Activated CD8-positive, alpha-beta memory T cell treated with anti-CD3 and anti-CD28 coated beads, Interleukin-2, amount 10 ng/mL, durations not matched to agents 7 days and 5 days (primary cell): ENCODE measurements at regions of chr6 and their contacts with region 1.

Region 1: GRCh38 chr6:152948150-152948768 is 34.6 kb downstream of the FBXO5 start:
- DNase-seq: no peak
- ATAC-seq: peak; percentile 69
- H3K4me3 Mint-ChIP-seq: no peak overlapping the region
- H3K27ac Mint-ChIP-seq: no peak overlapping the region
- H3K4me1 Mint-ChIP-seq: peaks cover 9% of the 10 kb centered on the region
- H3K27me3 Mint-ChIP-seq: peaks cover 22% of the 10 kb centered on the region

Region 2: GRCh38 chr6:152863618-152864326 is 84.5 kb before region 1 on chr6:
- CTCF ChIA-PET with region 1: interaction called, 13 read pairs
- DNase-seq: peak; percentile 70
- ATAC-seq: peak; percentile 83
- H3K4me3 Mint-ChIP-seq: no peak overlapping the region
- H3K27ac Mint-ChIP-seq: no peak overlapping the region
- H3K4me1 Mint-ChIP-seq: peaks cover 6% of the 10 kb centered on the region
- H3K27me3 Mint-ChIP-seq: peaks cover 11% of the 10 kb centered on the region

Region 3: DNA sequence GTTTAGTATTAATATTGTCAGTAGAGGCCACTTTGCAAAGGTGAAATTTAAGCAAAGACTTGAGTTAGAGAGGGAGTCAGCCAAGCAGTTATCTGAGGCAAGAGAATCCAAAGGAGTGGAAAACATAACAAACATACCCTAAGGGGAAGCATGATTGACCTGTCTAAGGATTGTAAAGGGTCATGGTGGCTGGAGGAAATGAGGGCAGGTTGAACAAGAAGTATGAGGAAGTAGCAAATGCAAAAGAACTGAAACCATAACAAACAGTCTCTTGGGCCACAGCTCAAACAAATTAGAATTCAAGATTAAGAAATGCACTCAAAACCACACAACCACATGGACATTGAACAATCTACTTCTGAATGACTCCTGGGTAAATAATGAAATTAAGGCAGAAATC is 68.6 kb before region 1 on chr6:
- CTCF ChIA-PET with region 1: no interaction called
- DNase-seq: no peak
- ATAC-seq: no peak
- H3K4me3 Mint-ChIP-seq: no peak overlapping the region
- H3K27ac Mint-ChIP-seq: no peak overlapping the region
- H3K4me1 Mint-ChIP-seq: no peaks in the 10 kb centered on the region
- H3K27me3 Mint-ChIP-seq: peaks cover 6% of the 10 kb centered on the region